ENCODE measurements at regions of chr10 and their contacts with region 1.

Region 1: GRCh38 chr10:6401562-6402348 is 178.3 kb downstream of the PRKCQ start:
- DNase-seq: peak; percentile 72
- ATAC-seq: peak; percentile 89
- H3K4me3 Mint-ChIP-seq: no peak overlapping the region
- H3K27ac Mint-ChIP-seq: no peak overlapping the region
- H3K4me1 Mint-ChIP-seq: peaks cover 35% of the 10 kb centered on the region
- H3K27me3 Mint-ChIP-seq: peaks cover 17% of the 10 kb centered on the region

Region 2: DNA sequence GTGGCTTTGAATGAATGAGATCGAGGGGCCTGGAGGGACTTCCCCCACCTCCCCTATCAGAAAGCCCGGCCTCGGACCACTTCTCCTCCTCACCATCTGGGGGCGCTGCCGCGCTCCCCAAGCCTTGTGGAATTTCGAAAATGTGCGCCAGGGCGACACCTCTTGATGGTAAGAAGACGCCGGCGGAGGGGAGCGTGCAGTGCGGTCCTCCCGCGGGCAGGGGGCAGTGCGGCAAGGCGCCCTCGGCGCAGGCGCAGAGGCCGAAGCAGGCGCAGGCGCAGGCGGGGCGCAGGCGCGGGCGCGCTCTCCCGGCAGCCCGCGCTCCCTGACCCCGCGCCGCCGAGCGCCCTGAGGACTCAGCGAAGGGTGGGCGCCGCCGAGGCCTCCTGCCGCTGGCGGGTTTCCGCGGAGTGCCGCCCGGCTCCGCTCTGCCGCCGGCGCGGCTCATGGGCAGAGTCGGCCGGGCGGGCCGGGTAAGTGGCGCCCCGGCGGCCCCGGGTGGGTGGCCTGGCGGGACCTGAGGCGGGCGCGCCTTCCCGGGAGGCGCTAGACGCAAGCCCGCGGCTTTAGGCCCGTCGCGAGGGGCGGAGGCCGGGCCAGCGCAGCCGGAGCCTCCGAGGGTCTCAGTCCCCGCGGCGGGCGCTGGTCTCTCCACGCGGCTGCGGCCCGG is 312.9 kb before region 1 on chr10 and contains the start of gene RBM17:
- CTCF ChIA-PET with region 1: interaction called, 10 read pairs
- DNase-seq: peak; percentile 98
- ATAC-seq: peak; percentile 84
- H3K4me3 Mint-ChIP-seq: peak within 1 kb of the TSS; percentile 87
- H3K27ac Mint-ChIP-seq: peak within 1 kb of the TSS; percentile 85
- H3K4me1 Mint-ChIP-seq: peaks cover 70% of the 10 kb centered on the region
- H3K27me3 Mint-ChIP-seq: no peaks in the 10 kb centered on the region
- total RNA-seq, gene RBM17: 205 to 267 TPM

Region 3: DNA sequence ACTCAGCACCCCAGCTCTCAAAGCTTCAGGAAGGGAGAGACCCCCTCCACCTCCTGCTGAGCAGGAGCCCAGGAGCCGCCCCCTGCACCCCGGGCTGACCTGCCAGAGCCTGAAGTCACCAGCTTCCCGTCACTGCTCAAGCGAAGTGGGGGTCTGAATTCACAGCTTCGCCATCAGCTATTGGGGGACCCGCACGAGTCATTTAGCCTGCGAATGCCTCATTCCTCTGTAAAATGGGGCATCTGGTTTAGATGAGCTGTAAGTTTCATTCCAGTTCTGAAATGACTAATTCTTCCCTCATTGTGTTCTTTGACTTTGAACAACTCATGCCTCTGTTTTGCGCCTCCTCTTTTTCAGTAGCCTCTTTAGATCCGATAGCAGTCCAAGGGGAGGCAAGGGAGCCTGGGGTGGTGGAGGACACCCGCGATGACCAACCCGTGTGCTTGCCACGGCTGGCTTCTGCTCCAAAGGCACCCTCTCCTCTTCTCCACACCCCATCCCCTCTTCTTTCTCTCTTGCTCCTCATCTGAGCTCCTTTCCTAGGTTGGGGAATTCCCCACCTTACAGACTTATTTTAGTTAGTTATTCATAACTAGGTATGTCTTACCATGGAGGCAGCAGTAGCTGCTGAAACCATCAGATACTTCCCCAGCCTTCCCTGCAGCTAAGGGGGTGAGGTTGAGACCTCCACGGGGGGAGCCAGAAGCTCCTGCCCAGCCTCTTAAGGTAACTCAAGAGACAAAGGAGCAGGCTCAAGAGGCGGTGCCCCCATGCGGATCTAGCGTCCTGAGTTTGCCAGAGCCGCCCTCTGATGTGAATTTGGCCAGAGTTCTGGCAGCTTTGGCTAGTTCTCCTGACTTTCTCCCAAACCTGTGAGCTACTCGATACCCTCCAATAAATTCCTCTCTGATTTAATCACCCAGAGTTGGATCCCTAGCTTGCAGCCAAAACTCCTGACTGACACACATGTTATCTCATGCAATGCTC is 265.2 kb before region 1 on chr10:
- CTCF ChIA-PET with region 1: interaction called, 10 read pairs
- DNase-seq: peak; percentile 83
- ATAC-seq: peak; percentile 65
- H3K4me3 Mint-ChIP-seq: peak overlapping the region; percentile 41
- H3K27ac Mint-ChIP-seq: peak overlapping the region; percentile 52
- H3K4me1 Mint-ChIP-seq: peaks cover 57% of the 10 kb centered on the region
- H3K27me3 Mint-ChIP-seq: peaks cover 25% of the 10 kb centered on the region

Region 4: DNA sequence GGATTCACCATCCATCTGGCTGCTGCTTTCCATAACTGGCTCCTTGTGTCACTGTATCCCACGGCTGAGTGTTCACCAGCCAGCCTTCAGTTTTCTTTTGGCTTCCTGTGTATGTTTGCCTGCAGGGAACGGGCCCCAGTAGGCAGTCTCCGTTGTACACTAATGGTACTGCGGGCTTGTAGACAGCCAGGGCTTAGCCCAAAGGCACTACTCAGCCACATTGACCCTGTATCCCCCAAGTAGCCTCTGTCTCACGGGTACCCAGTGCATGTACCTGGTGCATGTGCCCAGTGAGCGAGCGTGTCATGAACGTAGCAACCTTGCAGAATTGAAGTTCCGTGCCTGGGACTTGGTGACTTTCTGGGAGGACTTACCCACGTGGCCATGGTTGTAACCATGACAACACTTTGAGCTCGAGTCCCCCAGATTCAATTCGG is 192.9 kb before region 1 on chr10:
- CTCF ChIA-PET with region 1: interaction called, 67 read pairs
- DNase-seq: no peak
- ATAC-seq: no peak
- H3K4me3 Mint-ChIP-seq: no peak overlapping the region
- H3K27ac Mint-ChIP-seq: no peak overlapping the region
- H3K4me1 Mint-ChIP-seq: peaks cover 27% of the 10 kb centered on the region
- H3K27me3 Mint-ChIP-seq: no peaks in the 10 kb centered on the region

Region 5: GRCh38 chr10:6300106-6300783 is 101.5 kb before region 1 on chr10:
- CTCF ChIA-PET with region 1: interaction called, 12 read pairs
- DNase-seq: peak; percentile 60
- ATAC-seq: peak; percentile 80
- H3K4me3 Mint-ChIP-seq: peak overlapping the region; percentile 27
- H3K27ac Mint-ChIP-seq: peak overlapping the region; percentile 79
- H3K4me1 Mint-ChIP-seq: peaks cover 44% of the 10 kb centered on the region
- H3K27me3 Mint-ChIP-seq: no peaks in the 10 kb centered on the region

Region 6: GRCh38 chr10:6390213-6390845 is 11.4 kb before region 1 on chr10:
- CTCF ChIA-PET with region 1: interaction called, 12 read pairs
- DNase-seq: no peak
- ATAC-seq: no peak
- H3K4me3 Mint-ChIP-seq: no peak overlapping the region
- H3K27ac Mint-ChIP-seq: no peak overlapping the region
- H3K4me1 Mint-ChIP-seq: no peaks in the 10 kb centered on the region
- H3K27me3 Mint-ChIP-seq: no peaks in the 10 kb centered on the region

Region 7: DNA sequence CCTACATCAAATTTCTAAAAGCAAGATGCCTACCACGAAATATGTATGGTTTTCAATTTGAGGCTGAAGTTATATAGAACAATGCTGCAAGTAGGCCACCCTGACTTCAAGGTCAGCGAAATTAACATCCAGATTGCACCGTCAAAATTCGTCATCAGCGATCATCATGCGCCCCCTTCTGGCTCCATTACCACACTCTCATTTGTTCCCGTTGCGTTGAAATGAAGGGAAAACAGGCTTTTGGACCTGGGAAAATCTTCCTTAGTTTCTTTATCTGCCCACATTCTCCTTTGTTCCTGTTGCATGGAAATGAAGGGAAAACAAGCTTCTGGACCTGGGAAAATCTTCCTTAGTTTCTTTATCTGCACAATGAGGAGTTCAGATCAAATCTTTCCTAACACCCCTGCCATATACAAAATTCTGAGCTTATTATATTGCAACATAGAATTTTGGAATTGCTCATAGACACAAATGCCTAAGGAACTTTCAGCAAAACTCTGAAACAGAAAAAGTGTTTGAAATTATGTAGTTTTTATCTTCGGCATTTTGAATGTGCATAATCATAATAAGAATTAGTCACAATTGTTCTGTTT is 276.6 kb after region 1 on chr10:
- CTCF ChIA-PET with region 1: interaction called, 15 read pairs
- DNase-seq: peak; percentile 70
- ATAC-seq: peak; percentile 69
- H3K4me3 Mint-ChIP-seq: no peak overlapping the region
- H3K27ac Mint-ChIP-seq: no peak overlapping the region
- H3K4me1 Mint-ChIP-seq: peaks cover 10% of the 10 kb centered on the region
- H3K27me3 Mint-ChIP-seq: peaks cover 60% of the 10 kb centered on the region